ENCODE measurements at regions of chr11 and their contacts with region 1.

Region 1: DNA sequence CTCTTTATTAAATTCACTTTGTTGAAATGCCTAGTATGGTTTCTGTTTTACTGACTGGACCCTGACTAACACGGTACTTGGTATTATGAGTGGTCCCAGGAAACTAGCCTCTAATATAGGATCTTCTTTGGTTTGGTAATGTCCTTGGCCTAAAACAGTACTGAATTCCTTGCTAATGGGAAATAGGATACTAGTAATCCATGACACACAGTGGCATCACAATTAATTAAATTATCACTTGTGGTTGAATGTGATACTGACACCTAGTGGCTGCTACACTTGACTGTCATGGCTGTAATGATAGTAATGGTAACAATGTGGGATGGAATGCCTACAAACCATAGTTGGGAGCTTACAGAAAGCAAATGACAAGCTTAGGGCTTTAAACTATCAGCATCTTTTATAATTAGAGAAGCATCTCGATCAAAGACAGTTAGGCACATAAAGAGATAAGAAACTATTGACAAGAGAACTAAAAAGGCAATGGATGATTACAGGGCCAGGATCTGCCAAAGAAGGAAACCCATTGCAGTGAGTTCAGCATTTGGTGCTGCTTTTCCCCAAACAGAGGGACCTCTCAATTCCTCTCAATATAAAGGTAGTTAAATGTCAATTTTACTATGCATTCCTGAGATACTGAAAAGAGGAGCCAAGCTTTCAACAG is 8.6 kb downstream of the DNHD1 start:
- DNase-seq: peak; percentile 17 to 41 (median 27)
- H3K4me3 ChIP-seq: no peak overlapping the region
- H3K4me3 Mint-ChIP-seq: no peak overlapping the region
- H3K27ac ChIP-seq: no peak overlapping the region
- H3K27ac Mint-ChIP-seq: no peak overlapping the region
- H3K4me1 ChIP-seq: no peaks in the 10 kb centered on the region
- H3K4me1 Mint-ChIP-seq: peaks cover 0 to 5% (median 0%) of the 10 kb centered on the region in 4 donors
- H3K27me3 ChIP-seq: no peaks in the 10 kb centered on the region
- H3K27me3 Mint-ChIP-seq: no peaks in the 10 kb centered on the region

Region 2: GRCh38 chr11:6371825-6372224 is 133.9 kb before region 1 on chr11:
- CTCF ChIA-PET with region 1: interaction called, 161 read pairs
- POLR2A ChIA-PET with region 1: no interaction called
- intact Hi-C with region 1: no loop called
- DNase-seq: no peak
- H3K4me3 ChIP-seq: no peak overlapping the region
- H3K4me3 Mint-ChIP-seq: no peak overlapping the region
- H3K27ac ChIP-seq: no peak overlapping the region
- H3K27ac Mint-ChIP-seq: no peak overlapping the region
- H3K4me1 ChIP-seq: no peaks in the 10 kb centered on the region
- H3K4me1 Mint-ChIP-seq: peaks cover 0 to 7% (median 4%) of the 10 kb centered on the region in 4 donors
- H3K27me3 ChIP-seq: no peaks in the 10 kb centered on the region
- H3K27me3 Mint-ChIP-seq: no peaks in the 10 kb centered on the region

Region 3: GRCh38 chr11:6489306-6489705 is 16.4 kb before region 1 on chr11:
- CTCF ChIA-PET with region 1: interaction called, 30 read pairs
- POLR2A ChIA-PET with region 1: no interaction called
- intact Hi-C with region 1: no loop called
- DNase-seq: no peak
- H3K4me3 ChIP-seq: no peak overlapping the region
- H3K4me3 Mint-ChIP-seq: no peak overlapping the region
- H3K27ac ChIP-seq: no peak overlapping the region
- H3K27ac Mint-ChIP-seq: peak overlapping the region in 5 of 7 donors; percentile 18 to 38 (median 30)
- H3K4me1 ChIP-seq: peaks cover 6% of the 10 kb centered on the region
- H3K4me1 Mint-ChIP-seq: peaks cover 0 to 10% (median 4%) of the 10 kb centered on the region in 4 donors
- H3K27me3 ChIP-seq: no peaks in the 10 kb centered on the region
- H3K27me3 Mint-ChIP-seq: no peaks in the 10 kb centered on the region

Region 4: GRCh38 chr11:6627762-6628241 is 122.1 kb after region 1 on chr11:
- CTCF ChIA-PET with region 1: no interaction called
- POLR2A ChIA-PET with region 1: no interaction called
- intact Hi-C with region 1: no loop called
- DNase-seq: peak in 3 of 5 donors; percentile 25 to 33 (median 26)
- H3K4me3 ChIP-seq: no peak overlapping the region
- H3K4me3 Mint-ChIP-seq: peak overlapping the region; percentile 10 to 75 (median 52)
- H3K27ac ChIP-seq: peak overlapping the region; percentile 3
- H3K27ac Mint-ChIP-seq: peak overlapping the region; percentile 18 to 95 (median 48)
- H3K4me1 ChIP-seq: peaks cover 15% of the 10 kb centered on the region
- H3K4me1 Mint-ChIP-seq: peaks cover 8 to 19% (median 13%) of the 10 kb centered on the region in 4 donors
- H3K27me3 ChIP-seq: no peaks in the 10 kb centered on the region
- H3K27me3 Mint-ChIP-seq: no peaks in the 10 kb centered on the region

Measured in CD4-positive, alpha-beta memory T cell (primary cell).